ENCODE measurements at regions of chr12 and their contacts with region 1.

Region 1: GRCh38 chr12:7995266-7995963 is 37.1 kb upstream of the FOXJ2 start:
- DNase-seq: peak; percentile 84
- H3K4me3 Mint-ChIP-seq: no peak overlapping the region
- H3K27ac Mint-ChIP-seq: no peak overlapping the region
- H3K4me1 Mint-ChIP-seq: peaks cover 26% of the 10 kb centered on the region
- H3K27me3 Mint-ChIP-seq: no peaks in the 10 kb centered on the region

Region 2: DNA sequence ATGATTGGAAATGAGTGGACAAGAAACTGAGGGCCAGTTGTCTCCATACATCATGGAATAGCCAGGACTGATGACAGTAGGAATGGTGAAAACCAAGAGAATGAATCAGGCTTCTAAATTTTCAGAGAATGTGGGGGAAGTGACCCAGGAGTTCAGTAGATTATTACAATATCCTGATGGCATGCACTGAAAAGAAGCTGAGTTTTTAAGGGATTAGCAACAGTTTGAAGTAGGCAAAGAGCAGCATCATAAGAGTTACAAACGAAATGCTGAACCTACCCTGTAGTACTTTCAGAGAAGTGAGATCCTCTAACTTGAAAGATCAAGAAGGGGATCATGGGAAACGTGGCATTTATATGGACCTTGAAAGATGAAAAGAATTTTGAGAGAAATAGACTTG is 135.9 kb before region 1 on chr12:
- CTCF ChIA-PET with region 1: interaction called, 25 read pairs
- POLR2A ChIA-PET with region 1: no interaction called
- DNase-seq: no peak
- H3K4me3 Mint-ChIP-seq: no peak overlapping the region
- H3K27ac Mint-ChIP-seq: no peak overlapping the region
- H3K4me1 Mint-ChIP-seq: peaks cover 11% of the 10 kb centered on the region
- H3K27me3 Mint-ChIP-seq: peaks cover 9% of the 10 kb centered on the region

Region 3: DNA sequence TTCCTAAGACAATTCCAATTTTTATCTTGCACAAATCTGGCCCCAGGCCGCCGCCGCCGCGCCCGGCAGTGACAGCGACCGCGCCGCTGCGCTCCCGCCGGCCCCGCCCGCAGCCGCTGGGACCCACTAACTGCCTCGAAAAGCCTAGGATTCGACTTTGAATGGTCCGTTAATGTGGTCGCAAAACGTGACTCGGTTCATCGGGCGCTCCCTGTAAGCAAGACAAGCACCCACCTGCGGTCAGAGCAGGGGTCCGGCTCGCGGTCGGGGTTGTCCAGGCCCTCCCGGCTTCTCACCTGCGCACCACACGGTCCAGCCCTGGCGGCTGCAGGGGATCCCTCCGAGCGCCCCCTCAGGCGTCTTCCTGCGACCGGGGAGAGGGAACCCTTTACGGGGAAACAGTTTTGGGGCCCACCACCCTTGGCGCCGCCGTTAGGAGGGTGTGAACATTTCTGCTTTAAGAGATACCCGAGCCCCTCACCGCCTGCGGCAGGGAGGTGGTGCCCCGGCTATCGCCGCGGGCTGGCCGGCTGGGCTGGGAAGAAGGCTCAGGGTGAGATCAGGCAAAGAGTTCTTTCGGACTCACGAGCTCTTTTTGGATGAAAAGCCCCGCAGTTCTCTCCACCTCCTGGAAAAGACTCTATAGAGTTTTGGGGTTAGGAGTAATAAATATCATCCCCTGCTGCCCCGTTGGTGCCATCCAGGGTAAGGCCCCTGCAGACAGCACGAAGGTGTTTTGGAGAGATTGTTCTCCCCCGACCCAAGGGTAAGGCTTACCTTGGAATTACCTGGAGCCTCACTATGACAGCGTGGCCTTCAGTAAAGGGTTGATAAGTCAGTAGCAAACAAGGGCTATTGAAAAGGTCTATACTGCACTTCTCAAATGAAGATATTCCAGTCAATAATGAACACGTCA is 23.5 kb after region 1 on chr12:
- CTCF ChIA-PET with region 1: no interaction called
- POLR2A ChIA-PET with region 1: no interaction called
- DNase-seq: no peak
- H3K4me3 Mint-ChIP-seq: no peak overlapping the region
- H3K27ac Mint-ChIP-seq: no peak overlapping the region
- H3K4me1 Mint-ChIP-seq: peaks cover 3% of the 10 kb centered on the region
- H3K27me3 Mint-ChIP-seq: peaks cover 40% of the 10 kb centered on the region

Region 4: DNA sequence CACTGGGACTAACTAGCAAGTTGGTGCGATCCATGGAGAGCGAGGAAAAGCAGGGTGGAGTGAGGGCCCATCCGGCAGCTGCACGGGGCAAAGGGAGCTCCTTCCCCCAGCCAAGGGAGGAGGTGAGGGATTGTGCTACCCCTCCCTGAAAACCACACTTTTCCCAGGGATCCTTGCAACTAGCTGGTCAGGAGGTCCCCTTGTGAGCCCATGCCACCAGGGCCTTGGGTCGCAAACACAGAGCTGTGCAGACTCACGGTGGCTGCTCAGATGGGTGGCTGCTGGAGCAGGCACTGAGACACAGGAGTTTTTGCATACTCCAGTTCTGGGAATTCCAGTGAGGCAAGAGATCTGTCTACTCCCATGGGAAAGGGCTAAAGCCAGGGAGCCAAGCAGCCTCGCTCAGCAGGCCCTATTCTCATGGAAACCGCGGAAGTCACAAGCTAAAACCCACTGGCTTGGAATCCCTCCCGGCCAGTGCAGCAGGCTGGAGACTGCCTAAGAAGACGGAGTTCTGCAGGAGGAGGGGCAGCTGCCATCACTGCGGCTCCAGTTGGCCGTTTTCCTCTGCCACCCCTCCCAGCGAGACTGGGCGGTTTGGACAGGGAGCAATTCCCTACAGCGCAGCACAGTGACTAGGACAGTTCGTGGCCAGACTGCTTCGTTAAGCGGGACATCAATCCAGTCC is 150.5 kb after region 1 on chr12:
- CTCF ChIA-PET with region 1: no interaction called
- POLR2A ChIA-PET with region 1: no interaction called
- DNase-seq: no peak
- H3K4me3 Mint-ChIP-seq: no peak overlapping the region
- H3K27ac Mint-ChIP-seq: no peak overlapping the region
- H3K4me1 Mint-ChIP-seq: no peaks in the 10 kb centered on the region
- H3K27me3 Mint-ChIP-seq: peaks cover 29% of the 10 kb centered on the region

Measured in activated CD4-positive, alpha-beta memory T cell treated with anti-CD3 and anti-CD28 coated beads, Interleukin-2, amount 10 ng/mL, durations not matched to agents 7 days and 5 days (primary cell).